ENCODE measurements at regions of chr5 and their contacts with region 1.

Region 1: DNA sequence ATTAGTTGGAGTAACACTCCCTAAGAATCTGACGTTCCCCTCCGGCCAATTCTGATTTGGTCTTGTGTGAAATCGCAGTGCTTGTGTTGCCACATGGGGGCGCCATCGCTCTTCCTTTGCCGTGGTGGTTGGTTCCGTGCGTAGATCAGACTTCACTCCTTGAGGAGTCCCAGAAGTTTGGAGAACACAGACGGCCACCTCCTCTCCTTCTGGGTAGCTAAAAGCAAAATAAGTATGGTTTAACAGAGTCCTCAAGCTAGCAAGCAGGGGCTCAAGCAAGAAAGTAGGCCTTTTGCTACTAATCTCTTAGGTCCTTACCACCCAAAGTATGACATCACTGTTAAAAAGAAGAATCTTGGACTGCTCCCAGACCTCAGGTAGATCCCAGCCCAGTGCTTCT is 59.5 kb downstream of the HSPA4 start:
- DNase-seq: peak; percentile 91
- ATAC-seq: peak; percentile 64
- H3K4me3 Mint-ChIP-seq: no peak overlapping the region
- H3K27ac Mint-ChIP-seq: no peak overlapping the region
- H3K4me1 Mint-ChIP-seq: peaks cover 29% of the 10 kb centered on the region
- H3K27me3 Mint-ChIP-seq: no peaks in the 10 kb centered on the region

Region 2: GRCh38 chr5:133086366-133086875 is 24.9 kb before region 1 on chr5:
- CTCF ChIA-PET with region 1: no interaction called
- POLR2A ChIA-PET with region 1: no interaction called
- intact Hi-C with region 1: no loop called
- DNase-seq: no peak
- ATAC-seq: no peak
- H3K4me3 Mint-ChIP-seq: no peak overlapping the region
- H3K27ac Mint-ChIP-seq: peak overlapping the region; percentile 58
- H3K4me1 Mint-ChIP-seq: peaks cover 4% of the 10 kb centered on the region
- H3K27me3 Mint-ChIP-seq: no peaks in the 10 kb centered on the region

Region 3: GRCh38 chr5:133129950-133130349 is 18.7 kb after region 1 on chr5:
- CTCF ChIA-PET with region 1: interaction called, 12 read pairs
- POLR2A ChIA-PET with region 1: no interaction called
- intact Hi-C with region 1: no loop called
- DNase-seq: no peak
- ATAC-seq: no peak
- H3K4me3 Mint-ChIP-seq: no peak overlapping the region
- H3K27ac Mint-ChIP-seq: no peak overlapping the region
- H3K4me1 Mint-ChIP-seq: no peaks in the 10 kb centered on the region
- H3K27me3 Mint-ChIP-seq: no peaks in the 10 kb centered on the region

Region 4: GRCh38 chr5:133245198-133245968 is 134.1 kb after region 1 on chr5:
- CTCF ChIA-PET with region 1: no interaction called
- POLR2A ChIA-PET with region 1: no interaction called
- intact Hi-C with region 1: loop called in 1 of 2 experiments (anchors 2 kb)
- DNase-seq: peak; percentile 80
- ATAC-seq: peak; percentile 95
- H3K4me3 Mint-ChIP-seq: no peak overlapping the region
- H3K27ac Mint-ChIP-seq: no peak overlapping the region
- H3K4me1 Mint-ChIP-seq: peaks cover 24% of the 10 kb centered on the region
- H3K27me3 Mint-ChIP-seq: no peaks in the 10 kb centered on the region

Region 5: GRCh38 chr5:133347039-133347438 is 235.7 kb after region 1 on chr5:
- CTCF ChIA-PET with region 1: no interaction called
- POLR2A ChIA-PET with region 1: no interaction called
- intact Hi-C with region 1: loop called in 1 of 2 experiments (anchors 5 kb)
- DNase-seq: no peak
- ATAC-seq: peak; percentile 55
- H3K4me3 Mint-ChIP-seq: no peak overlapping the region
- H3K27ac Mint-ChIP-seq: no peak overlapping the region
- H3K4me1 Mint-ChIP-seq: no peaks in the 10 kb centered on the region
- H3K27me3 Mint-ChIP-seq: peaks cover 2% of the 10 kb centered on the region

Region 6: DNA sequence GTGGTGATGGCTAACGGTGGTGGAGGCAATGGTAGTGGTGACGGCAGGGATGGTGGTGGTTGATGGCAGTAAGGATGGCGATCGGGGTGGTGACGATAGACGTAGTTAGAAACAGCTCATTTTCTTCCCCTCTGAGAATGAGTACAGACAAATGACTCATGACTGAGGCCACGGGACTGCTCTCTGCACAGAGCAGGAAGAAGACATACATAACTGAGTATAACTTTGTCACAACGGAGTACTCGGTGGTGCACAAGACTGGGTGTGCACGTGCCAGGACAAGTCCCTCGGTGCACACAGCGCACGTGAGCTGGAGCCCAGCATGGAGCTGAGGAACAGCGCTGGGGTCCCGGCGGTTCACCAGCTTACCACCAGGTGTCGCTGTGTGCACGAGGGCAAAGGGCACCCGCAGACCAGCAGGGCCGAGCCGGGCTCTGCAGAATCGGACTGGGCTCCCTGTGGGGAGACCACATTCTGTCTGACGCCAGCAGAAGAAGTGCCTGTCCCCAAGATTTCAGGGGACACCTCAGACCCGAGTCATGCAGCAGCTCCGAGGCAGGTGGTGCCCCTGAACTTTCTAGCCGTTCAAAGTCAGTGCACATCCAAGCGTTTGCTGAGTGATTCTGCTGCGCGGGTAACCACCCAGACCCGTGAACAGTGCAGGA is 312.5 kb after region 1 on chr5:
- CTCF ChIA-PET with region 1: interaction called, 3 read pairs
- POLR2A ChIA-PET with region 1: no interaction called
- intact Hi-C with region 1: loop called in 1 of 2 experiments (anchors 1 kb)
- DNase-seq: peak; percentile 87
- ATAC-seq: peak; percentile 96
- H3K4me3 Mint-ChIP-seq: no peak overlapping the region
- H3K27ac Mint-ChIP-seq: peak overlapping the region; percentile 26
- H3K4me1 Mint-ChIP-seq: peaks cover 9% of the 10 kb centered on the region
- H3K27me3 Mint-ChIP-seq: peaks cover 13% of the 10 kb centered on the region

Region 7: DNA sequence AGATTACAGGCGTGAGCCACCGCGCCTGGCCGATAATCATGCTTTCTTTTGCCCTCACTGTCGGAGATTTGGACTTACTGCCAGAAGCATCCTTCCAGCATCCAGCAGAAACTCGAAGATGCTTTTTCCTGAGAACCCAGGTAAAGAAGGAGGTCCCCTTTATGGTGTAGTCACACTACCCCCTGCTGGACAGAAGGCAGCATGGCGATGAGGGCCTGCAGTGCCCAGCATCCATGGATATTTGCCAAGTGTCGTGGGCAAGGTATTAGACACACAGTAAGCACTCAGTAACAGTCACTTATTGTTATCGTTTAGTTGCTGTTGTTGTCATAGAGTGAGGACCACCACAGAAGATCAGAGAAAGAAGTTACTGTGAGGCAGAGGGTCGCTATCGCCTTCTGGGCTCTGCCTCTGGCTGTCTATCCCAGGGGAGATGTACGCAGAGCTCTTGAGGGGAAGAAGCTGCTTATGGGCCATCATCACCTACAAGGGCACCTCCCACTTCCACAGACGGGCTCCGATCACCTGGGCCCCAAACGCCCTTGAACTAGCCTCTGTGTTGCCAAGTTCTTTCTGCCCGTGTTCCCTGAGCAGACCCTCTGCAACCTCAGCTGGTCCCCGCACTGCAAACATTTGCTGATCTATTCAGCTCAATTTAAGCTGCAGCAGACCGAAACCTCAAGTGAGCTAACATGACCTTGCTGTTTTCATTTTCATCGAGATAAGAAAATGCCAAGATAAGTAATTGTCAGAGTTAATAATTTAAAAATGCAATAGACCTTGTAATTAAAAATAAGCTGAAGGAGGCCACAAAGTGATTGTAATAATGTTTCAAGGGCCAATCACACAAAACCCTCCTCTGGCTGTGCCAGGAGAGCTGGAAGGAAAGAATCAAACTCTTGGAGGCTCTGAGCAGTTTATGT is 833.2 kb after region 1 on chr5:
- CTCF ChIA-PET with region 1: no interaction called
- POLR2A ChIA-PET with region 1: no interaction called
- intact Hi-C with region 1: loop called (anchors 1 to 5 kb)
- DNase-seq: peak; percentile 78
- ATAC-seq: peak; percentile 81
- H3K4me3 Mint-ChIP-seq: no peak overlapping the region
- H3K27ac Mint-ChIP-seq: no peak overlapping the region
- H3K4me1 Mint-ChIP-seq: peaks cover 3% of the 10 kb centered on the region
- H3K27me3 Mint-ChIP-seq: no peaks in the 10 kb centered on the region

Measured in activated CD4-positive, alpha-beta T cell treated with anti-CD3 and anti-CD28 coated beads for 36 hours (primary cell).